GM12878 (cell line): ENCODE measurements at regions of chr7 and their contacts with region 1.

Region 1: GRCh38 chr7:139133335-139134139 is 24.0 kb upstream of the ZC3HAV1 start:
- DNase-seq: peak; percentile 53
- ATAC-seq: peak; percentile 98
- H3K4me3 ChIP-seq: peak overlapping the region; percentile 77
- H3K27ac ChIP-seq: no peak overlapping the region; the same call in 1 of the 2 replicates
- H3K4me1 ChIP-seq: peaks cover 13% of the 10 kb centered on the region; the same call in 1 of the 2 replicates
- H3K27me3 ChIP-seq: no peaks in the 10 kb centered on the region
- CTCF ChIP-seq: no peak
- EP300 ChIP-seq: 0 out of 4 replicates have a peak, but pooled peaks of 1 of the 2 experiments have one; percentile 29
- POLR2A ChIP-seq: peak; percentile 75
- RAD21 ChIP-seq: peak; percentile 22; the same call in 1 of the 2 replicates

Region 2: DNA sequence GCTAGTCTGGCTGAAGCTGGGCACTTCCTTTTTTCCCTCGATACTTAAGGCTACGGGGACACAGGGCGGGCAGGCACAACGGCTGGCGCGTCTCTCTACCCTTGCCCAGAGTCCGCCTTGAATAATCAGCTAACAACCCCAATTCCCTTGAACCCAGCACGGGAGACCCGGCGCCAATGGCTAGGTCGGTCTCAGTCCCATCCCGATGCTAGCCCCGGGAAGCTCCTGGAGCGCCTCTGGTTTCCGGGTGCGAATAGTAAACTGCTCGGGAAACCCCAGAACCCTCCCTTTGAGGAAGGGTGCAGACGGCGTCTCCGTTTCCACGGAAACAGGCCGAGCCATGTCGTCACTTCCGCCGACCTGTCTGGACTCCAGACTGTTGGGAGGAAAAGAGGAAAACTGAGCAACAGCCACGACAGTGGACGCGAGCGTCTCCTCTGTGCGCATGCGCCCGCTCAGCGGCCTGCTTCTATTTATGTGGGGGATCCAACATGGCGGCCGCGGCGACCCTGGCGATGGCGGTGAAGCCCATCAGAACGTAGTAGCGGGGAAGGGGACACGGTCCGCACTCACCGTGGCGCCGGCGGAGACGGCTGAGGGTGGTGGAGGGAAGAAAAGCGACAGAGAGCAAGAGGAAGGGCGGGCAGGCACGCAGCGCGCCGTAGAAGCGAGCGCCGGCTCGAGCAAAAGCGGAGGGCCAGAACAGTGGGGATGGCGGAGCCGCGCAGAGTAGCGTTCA is 97.4 kb after region 1 on chr7 and contains the start of gene UBN2:
- CTCF ChIA-PET with region 1: no interaction called
- POLR2A ChIA-PET with region 1: interaction called, 3 read pairs
- RAD21 ChIA-PET with region 1: no interaction called
- SMC1A ChIA-PET with region 1: interaction called, 4 read pairs
- in situ Hi-C with region 1: no loop called
- intact Hi-C with region 1: loop called (anchors 5 kb)
- DNase-seq: peak; percentile 96
- ATAC-seq: peak; percentile 92
- H3K4me3 ChIP-seq: peak within 1 kb of the TSS; percentile 100
- H3K27ac ChIP-seq: peak within 1 kb of the TSS; percentile 74
- H3K4me1 ChIP-seq: no peaks in the 10 kb centered on the region
- H3K27me3 ChIP-seq: no peaks in the 10 kb centered on the region
- CTCF ChIP-seq: no peak
- EP300 ChIP-seq: 0 out of 4 replicates have a peak, but pooled peaks of 1 of the 2 experiments have one; percentile 32
- POLR2A ChIP-seq: peak; percentile 90
- RAD21 ChIP-seq: no peak
- polyA plus RNA-seq, gene UBN2: 0.27 to 0.37 TPM

Region 3: GRCh38 chr7:139471740-139472353 is 338.3 kb after region 1 on chr7:
- CTCF ChIA-PET with region 1: no interaction called
- POLR2A ChIA-PET with region 1: no interaction called
- RAD21 ChIA-PET with region 1: no interaction called
- SMC1A ChIA-PET with region 1: no interaction called
- in situ Hi-C with region 1: no loop called
- intact Hi-C with region 1: no loop called
- DNase-seq: no peak
- ATAC-seq: no peak
- H3K4me3 ChIP-seq: no peak overlapping the region
- H3K27ac ChIP-seq: no peak overlapping the region
- H3K4me1 ChIP-seq: no peaks in the 10 kb centered on the region
- H3K27me3 ChIP-seq: no peaks in the 10 kb centered on the region; a peak in 1 of 4 replicates
- CTCF ChIP-seq: no peak
- EP300 ChIP-seq: no peak
- POLR2A ChIP-seq: no peak
- RAD21 ChIP-seq: no peak